ENCODE measurements at regions of chr1 and their contacts with region 1.

Region 1: DNA sequence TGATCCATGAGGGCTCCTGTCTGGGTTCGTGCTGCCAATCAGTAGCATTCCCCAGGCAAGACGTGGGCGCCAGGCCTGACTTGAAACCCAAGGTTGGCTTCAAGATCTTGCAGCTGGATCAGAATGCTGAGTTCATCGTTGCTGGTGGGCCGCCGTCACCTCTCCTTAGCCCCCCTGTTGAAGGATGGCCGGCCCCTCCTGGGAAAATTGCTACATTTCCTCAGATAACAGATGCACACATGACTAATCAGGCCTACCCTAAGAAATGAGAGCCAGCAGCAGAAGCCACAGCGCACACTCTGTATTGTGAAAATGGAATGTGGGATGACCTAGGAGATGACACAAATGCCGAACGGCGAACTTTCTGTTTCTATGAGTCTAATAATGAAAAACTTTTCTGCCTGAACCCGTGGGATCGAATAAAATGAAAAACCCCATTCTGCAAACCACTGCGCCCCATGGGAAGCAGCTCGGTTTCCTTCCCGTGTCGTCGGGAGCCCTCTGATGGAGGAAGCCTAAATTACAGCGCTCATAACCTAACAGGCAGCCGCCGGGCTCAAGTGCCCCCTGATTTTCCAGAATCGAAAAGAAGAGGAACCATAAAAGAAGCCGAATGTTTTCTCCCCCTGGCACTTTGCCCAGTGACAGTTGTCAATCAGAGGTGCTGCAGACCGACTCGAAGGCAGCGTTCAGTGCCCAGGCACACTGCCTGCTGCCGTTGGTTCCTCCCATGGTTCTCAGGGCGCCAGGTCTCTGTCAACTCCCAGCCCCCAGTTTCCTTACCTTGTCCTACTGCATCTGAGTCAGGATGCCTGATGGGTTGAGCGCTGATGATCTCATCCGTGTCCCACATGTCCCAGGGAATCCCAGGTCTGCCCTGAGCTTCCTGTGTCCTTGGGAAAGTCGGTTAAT is 38.2 kb upstream of the H6PD start:
- DNase-seq: peak; percentile 70 to 82 (median 77)
- ATAC-seq: peak; percentile 35 to 74 (median 70)
- H3K4me3 ChIP-seq: peak overlapping the region in 9 of 12 donors; percentile 4 to 27 (median 17)
- H3K27ac ChIP-seq: peak overlapping the region in 11 of 12 donors; percentile 11 to 84 (median 49)
- H3K4me1 ChIP-seq: peaks cover 4 to 44% (median 27%) of the 10 kb centered on the region in 12 donors
- H3K27me3 ChIP-seq: peaks cover 0 to 40% (median 18%) of the 10 kb centered on the region in 9 donors
- CTCF ChIP-seq: peak; percentile 65 to 91 (median 86)
- POLR2A ChIP-seq: no peak

Region 2: DNA sequence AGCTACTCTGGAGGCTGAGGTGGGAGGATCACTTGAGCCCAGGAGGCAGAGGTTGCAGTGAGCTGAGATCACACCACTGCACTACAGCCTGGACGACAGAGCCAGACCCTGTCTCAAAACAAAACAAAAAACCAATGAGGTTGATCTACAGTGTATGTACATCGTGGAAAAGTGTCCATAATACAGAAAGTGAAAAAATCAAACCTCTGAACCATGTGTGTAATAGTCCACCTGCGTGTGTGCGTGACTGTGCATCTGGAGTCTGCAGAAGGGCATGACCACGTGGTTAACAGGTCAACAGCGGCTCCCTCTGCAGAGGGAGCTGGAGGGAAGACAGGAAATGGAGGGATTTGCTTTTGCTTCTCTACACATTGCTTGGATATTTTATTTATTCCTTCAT is 285.5 kb before region 1 on chr1:
- intact Hi-C with region 1: loop called in 1 of 10 experiments (anchors 10 kb)
- DNase-seq: no peak
- ATAC-seq: no peak
- H3K4me3 ChIP-seq: no peak overlapping the region
- H3K27ac ChIP-seq: no peak overlapping the region
- H3K4me1 ChIP-seq: peaks cover 0 to under 1% (median 0%) of the 10 kb centered on the region in 12 donors
- H3K27me3 ChIP-seq: no peaks in the 10 kb centered on the region
- CTCF ChIP-seq: no peak
- POLR2A ChIP-seq: no peak

Region 3: GRCh38 chr1:9004700-9005394 is 191.5 kb before region 1 on chr1:
- intact Hi-C with region 1: loop called in 1 of 10 experiments (anchors 5 kb)
- DNase-seq: peak; percentile 62 to 84 (median 75)
- ATAC-seq: peak; percentile 46 to 92 (median 82)
- H3K4me3 ChIP-seq: no peak overlapping the region
- H3K27ac ChIP-seq: no peak overlapping the region
- H3K4me1 ChIP-seq: peaks cover 0 to 8% (median 0%) of the 10 kb centered on the region in 12 donors
- H3K27me3 ChIP-seq: no peaks in the 10 kb centered on the region
- CTCF ChIP-seq: peak; percentile 90 to 97 (median 93)
- POLR2A ChIP-seq: no peak

Region 4: DNA sequence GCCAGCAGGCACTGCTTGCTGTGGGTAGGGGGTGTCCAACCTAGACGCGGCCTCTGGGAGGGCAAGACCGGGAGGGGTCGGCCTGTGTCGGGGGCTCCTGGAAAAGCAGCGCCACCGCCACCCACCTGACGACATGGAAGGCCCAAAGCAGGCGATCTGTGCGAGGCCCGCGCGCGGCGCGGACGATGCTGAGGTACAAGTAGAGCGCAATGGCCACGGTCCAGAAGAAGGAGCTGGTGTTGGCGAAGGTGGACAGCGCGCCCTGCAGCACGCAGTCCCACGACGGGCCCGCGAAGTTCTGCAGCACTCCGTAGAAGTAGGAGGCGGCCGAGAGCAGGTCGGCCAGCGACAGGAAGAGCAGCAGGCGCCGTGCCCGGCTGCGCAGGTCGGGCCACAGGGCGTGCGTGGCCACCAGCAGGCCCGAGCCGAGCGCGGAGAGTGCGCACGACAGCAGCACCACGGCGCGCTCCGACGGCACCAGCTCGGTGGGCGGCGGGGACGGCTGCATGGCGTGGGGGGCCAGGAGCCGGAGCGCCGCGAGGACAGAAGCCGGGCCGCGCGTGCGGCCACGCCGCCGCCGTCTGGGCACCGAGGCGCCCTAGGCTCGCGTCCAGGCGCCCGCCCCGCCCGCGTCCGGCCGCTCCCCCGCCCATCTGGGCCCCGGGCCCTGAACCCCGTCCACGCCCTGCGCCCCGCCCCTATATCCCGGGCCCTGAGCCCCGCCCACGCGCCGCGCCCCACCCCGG is 67.7 kb before region 1 on chr1 and contains the start of gene GPR157:
- intact Hi-C with region 1: loop called in 1 of 10 experiments (anchors 5 kb)
- DNase-seq: peak; percentile 90 to 96 (median 93)
- ATAC-seq: peak; percentile 90 to 97 (median 94)
- H3K4me3 ChIP-seq: peak within 1 kb of the TSS; percentile 53 to 90 (median 66)
- H3K27ac ChIP-seq: peak within 1 kb of the TSS; percentile 69 to 92 (median 90)
- H3K4me1 ChIP-seq: peaks cover 0 to 30% (median 15%) of the 10 kb centered on the region in 12 donors
- H3K27me3 ChIP-seq: no peaks in the 10 kb centered on the region
- CTCF ChIP-seq: peak in 4 of 12 donors; percentile 15 to 28 (median 17)
- POLR2A ChIP-seq: peak; percentile 20 to 86
- total RNA-seq, gene GPR157: 21.1 to 41.8 (median 30.3) TPM

Region 5: GRCh38 chr1:9145021-9145668 is 51.2 kb before region 1 on chr1:
- intact Hi-C with region 1: loop called (anchors 1 to 5 kb)
- DNase-seq: peak in 1 of 5 donors; percentile 26
- ATAC-seq: no peak
- H3K4me3 ChIP-seq: no peak overlapping the region
- H3K27ac ChIP-seq: no peak overlapping the region
- H3K4me1 ChIP-seq: peaks cover 0 to 30% (median 12%) of the 10 kb centered on the region in 12 donors
- H3K27me3 ChIP-seq: no peaks in the 10 kb centered on the region
- CTCF ChIP-seq: no peak
- POLR2A ChIP-seq: no peak

Region 6: GRCh38 chr1:9181176-9181906 is 15.0 kb before region 1 on chr1:
- intact Hi-C with region 1: loop called in 1 of 10 experiments (anchors 2 kb)
- DNase-seq: peak; percentile 67 to 89 (median 76)
- ATAC-seq: peak; percentile 54 to 80 (median 70)
- H3K4me3 ChIP-seq: peak overlapping the region; percentile 55 to 86 (median 76)
- H3K27ac ChIP-seq: peak overlapping the region in 10 of 12 donors; percentile 15 to 85 (median 70)
- H3K4me1 ChIP-seq: peaks cover 0 to 57% (median 13%) of the 10 kb centered on the region in 12 donors
- H3K27me3 ChIP-seq: peaks cover 0 to 20% (median 0%) of the 10 kb centered on the region in 9 donors
- CTCF ChIP-seq: peak; percentile 91 to 98 (median 96)
- POLR2A ChIP-seq: no peak

Region 7: GRCh38 chr1:9270290-9270883 is 74.0 kb after region 1 on chr1:
- intact Hi-C with region 1: no loop called
- DNase-seq: peak in 2 of 5 donors; percentile 65 to 74
- ATAC-seq: peak; percentile 39 to 54 (median 49)
- H3K4me3 ChIP-seq: no peak overlapping the region
- H3K27ac ChIP-seq: no peak overlapping the region
- H3K4me1 ChIP-seq: peaks cover 0 to 36% (median 6%) of the 10 kb centered on the region in 12 donors
- H3K27me3 ChIP-seq: no peaks in the 10 kb centered on the region
- CTCF ChIP-seq: no peak
- POLR2A ChIP-seq: no peak